Endothelial cell of umbilical vein (primary cell): ENCODE measurements at regions of chr20 and their contacts with region 1.

Region 1: DNA sequence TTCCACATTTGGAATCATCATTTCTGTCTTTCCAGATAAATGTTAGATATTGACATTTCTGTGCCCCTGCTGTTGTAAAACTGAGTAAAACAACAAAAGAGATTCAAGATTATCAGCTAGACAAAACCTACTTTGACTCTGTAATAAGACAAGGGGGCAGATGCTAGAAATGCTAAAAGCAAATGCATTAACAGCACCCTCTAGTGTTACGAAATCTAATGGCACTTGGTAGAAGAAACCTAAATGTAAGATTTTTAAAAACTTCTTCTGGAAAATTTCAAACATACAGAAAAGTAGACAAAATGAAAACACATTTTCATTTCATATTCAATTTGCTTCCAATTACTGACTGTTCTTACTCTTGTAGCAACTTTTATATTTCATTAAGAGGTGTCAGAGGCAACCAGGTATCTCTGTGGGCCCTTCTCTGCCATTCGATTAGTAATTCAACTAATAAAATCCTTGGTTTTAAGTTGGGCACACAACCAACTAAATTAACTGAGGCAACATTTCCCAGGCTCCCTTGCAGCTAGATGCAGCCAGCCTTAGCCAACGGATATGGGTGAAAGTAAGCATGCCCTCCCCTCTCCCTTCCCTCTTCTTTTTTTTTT is 45.0 kb downstream of the SLC23A2 start:
- DNase-seq: peak; percentile 79
- H3K4me3 ChIP-seq: no peak overlapping the region
- H3K27ac ChIP-seq: no peak overlapping the region
- H3K4me1 ChIP-seq: peaks cover 3% of the 10 kb centered on the region
- H3K27me3 ChIP-seq: no peaks in the 10 kb centered on the region
- CTCF ChIP-seq: peak; percentile 45 to 68
- POLR2A ChIP-seq: no peak

Region 2: DNA sequence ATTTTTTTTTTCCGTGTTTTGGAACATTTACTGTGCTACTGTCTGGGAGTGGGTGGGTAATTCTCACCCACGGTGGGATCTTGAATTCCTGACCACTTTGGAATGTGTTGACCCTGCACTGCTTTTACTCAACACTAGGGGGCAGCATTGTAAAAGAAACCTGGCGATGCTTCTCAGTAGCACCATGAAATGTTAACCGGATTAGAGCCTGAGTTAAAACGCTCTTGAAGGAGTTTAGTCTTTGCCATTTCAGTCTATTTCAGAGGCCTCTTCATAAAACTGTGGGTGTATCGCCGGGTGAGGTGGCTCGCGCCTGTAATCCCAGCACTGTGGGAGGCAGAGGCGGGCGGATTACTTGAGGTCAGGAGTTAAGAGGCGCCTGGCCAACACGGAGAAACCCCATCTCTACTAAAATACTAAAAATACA is 349.0 kb before region 1 on chr20:
- CTCF ChIA-PET with region 1: interaction called, 5 read pairs
- POLR2A ChIA-PET with region 1: interaction called, 10 read pairs
- dilution Hi-C with region 1: no loop called
- intact Hi-C with region 1: loop called (anchors 5 kb)
- DNase-seq: peak; percentile 66
- H3K4me3 ChIP-seq: no peak overlapping the region
- H3K27ac ChIP-seq: no peak overlapping the region
- H3K4me1 ChIP-seq: no peaks in the 10 kb centered on the region
- H3K27me3 ChIP-seq: peaks cover 19 to 33% of the 10 kb centered on the region in 2 experiments
- CTCF ChIP-seq: peak; percentile 73 to 86
- POLR2A ChIP-seq: no peak

Region 3: GRCh38 chr20:4748847-4749246 is 207.5 kb before region 1 on chr20:
- CTCF ChIA-PET with region 1: interaction called, 10 read pairs
- POLR2A ChIA-PET with region 1: no interaction called
- dilution Hi-C with region 1: no loop called
- intact Hi-C with region 1: no loop called
- DNase-seq: peak; percentile 66
- H3K4me3 ChIP-seq: no peak overlapping the region
- H3K27ac ChIP-seq: no peak overlapping the region
- H3K4me1 ChIP-seq: peaks cover 8% of the 10 kb centered on the region
- H3K27me3 ChIP-seq: peaks cover 28 to 36% of the 10 kb centered on the region in 2 experiments
- CTCF ChIP-seq: no peak
- POLR2A ChIP-seq: no peak

Region 4: GRCh38 chr20:4925842-4926530 is 30.3 kb before region 1 on chr20:
- CTCF ChIA-PET with region 1: interaction called, 10 read pairs
- POLR2A ChIA-PET with region 1: no interaction called
- dilution Hi-C with region 1: no loop called
- intact Hi-C with region 1: no loop called
- DNase-seq: peak; percentile 96
- H3K4me3 ChIP-seq: peak overlapping the region in 1 of 3 experiments; percentile 25
- H3K27ac ChIP-seq: peak overlapping the region; percentile 89
- H3K4me1 ChIP-seq: peaks cover 16% of the 10 kb centered on the region
- H3K27me3 ChIP-seq: no peaks in the 10 kb centered on the region
- CTCF ChIP-seq: no peak
- POLR2A ChIP-seq: no peak

Region 5: DNA sequence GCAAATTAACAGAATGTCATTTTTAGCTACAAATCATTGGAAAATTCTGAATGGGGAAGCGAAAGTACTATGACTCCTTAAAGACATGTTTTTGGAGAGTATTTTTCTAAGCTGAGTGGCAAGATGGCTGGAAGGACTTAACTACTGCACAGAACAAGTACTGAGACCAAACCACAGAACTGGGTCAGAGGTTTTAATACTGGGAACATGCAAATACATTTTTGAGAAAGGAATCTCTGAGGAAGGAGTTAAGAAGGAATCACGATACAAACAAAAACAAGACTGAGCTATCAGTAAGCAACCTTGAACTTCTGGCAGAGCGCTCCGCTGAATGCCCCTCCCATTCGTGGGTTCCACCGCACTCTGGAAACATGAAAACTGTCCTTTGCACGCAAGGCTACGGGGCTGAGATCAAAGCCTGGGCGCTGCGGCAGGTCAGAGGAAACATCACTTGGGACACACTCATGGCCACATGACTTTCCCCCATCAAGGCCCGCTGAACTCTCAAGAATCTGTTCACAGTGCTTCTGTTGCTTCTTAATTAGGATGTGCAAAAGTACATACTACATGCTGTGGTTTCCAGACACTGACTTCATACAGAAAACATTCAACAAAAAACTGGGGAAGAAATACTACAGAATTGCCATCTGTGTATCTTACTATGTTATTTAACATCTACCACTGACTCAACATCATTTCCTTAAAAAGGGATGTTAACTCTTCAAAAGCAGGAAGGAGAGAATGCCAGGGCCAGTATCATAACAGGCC is 17.2 kb after region 1 on chr20:
- CTCF ChIA-PET with region 1: interaction called, 9 read pairs
- POLR2A ChIA-PET with region 1: no interaction called
- dilution Hi-C with region 1: no loop called
- intact Hi-C with region 1: loop called (anchors 2 kb)
- DNase-seq: peak; percentile 95
- H3K4me3 ChIP-seq: peak overlapping the region; percentile 17 to 69 (median 34)
- H3K27ac ChIP-seq: peak overlapping the region; percentile 92
- H3K4me1 ChIP-seq: peaks cover 30% of the 10 kb centered on the region
- H3K27me3 ChIP-seq: no peaks in the 10 kb centered on the region
- CTCF ChIP-seq: no peak
- POLR2A ChIP-seq: no peak